ENCODE measurements at regions of chr2 and their contacts with region 1.

Region 1: GRCh38 chr2:222613715-222614331 is 42.1 kb downstream of the FARSB start:
- DNase-seq: peak; percentile 14
- H3K4me3 ChIP-seq: no peak overlapping the region
- H3K27ac ChIP-seq: no peak overlapping the region
- H3K4me1 ChIP-seq: no peaks in the 10 kb centered on the region
- H3K27me3 ChIP-seq: no peaks in the 10 kb centered on the region
- CTCF ChIP-seq: peak; percentile 72 to 78

Region 2: DNA sequence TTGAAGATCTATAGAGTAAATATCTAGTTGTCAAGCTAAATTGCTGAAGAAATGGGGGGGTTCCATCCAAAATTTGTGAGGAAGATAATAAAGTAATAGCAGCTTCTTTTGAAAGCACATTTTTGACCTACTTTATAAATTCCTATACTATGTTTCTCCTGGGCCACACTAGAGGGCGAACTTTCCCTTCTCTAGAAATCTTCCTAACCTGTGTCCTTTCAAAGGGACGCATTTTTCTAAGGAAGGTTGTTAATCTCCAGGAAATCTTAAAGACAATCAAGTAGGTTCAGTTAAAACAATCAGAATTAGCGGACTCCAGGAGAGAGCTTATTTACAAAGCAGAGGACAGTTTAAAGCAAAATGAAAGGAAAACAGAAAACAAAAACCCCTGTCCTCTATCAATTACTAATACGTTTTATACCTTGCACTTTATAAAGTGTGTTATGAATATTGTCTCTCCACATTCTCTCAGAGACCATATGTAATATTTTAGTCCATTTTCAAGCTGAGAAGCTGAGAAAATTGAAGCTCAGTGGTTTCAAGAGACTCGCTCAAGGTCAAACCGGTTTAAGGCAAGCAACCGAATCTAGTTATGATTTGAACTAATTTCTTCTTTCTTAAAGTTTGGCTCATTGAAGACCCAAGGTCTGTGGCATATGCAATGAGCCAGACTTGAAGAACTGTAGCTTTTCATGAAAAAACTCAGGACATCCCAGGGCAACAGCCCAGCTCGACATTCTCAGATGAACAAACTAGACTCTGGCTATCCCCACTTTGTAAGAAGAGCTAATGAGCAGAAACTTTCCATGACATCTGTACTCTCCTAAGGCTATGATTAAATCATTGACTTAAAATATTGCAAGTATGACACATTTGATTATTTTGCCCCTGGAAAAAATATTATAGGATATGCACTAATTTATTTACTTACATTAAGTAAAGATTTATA is 588.6 kb before region 1 on chr2:
- CTCF ChIA-PET with region 1: no interaction called
- dilution Hi-C with region 1: no loop called
- in situ Hi-C with region 1: no loop called
- intact Hi-C with region 1: loop called (anchors 1 kb)
- DNase-seq: peak; percentile 14
- H3K4me3 ChIP-seq: no peak overlapping the region
- H3K27ac ChIP-seq: no peak overlapping the region
- H3K4me1 ChIP-seq: no peaks in the 10 kb centered on the region
- H3K27me3 ChIP-seq: no peaks in the 10 kb centered on the region
- CTCF ChIP-seq: peak; percentile 62 to 76

Region 3: DNA sequence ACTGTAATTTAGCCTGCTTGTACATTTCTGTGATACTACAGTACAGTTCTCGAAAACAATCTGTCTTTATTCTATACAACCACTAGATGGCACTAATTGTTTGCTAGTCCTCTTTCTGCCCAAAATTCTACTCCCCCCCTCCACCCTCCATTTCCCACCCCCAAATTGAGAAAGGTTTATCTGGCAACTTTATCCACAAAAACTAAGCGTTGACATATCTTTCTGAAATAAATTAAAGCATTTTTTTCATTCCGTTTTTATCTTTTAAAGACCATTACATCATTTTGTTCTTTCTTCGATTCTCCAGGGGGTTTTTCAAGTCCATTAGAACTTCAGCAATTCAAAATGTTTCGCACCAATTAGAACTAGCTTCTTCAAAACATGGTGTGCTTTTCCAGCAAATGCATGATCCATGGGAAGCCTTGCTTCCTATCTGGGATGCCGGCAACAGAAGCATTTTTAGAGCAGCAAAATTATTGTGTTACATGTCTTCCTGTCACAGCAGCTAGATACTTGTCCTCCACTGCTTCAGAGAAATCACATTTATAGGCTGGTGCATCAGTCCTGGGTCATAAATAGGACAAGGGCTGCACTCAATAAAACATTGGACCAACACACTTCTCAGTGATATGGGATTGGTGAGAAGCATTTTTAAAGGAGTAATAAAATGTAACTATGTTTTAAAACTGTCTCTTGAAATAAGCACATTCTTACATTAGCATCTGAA is 556.3 kb before region 1 on chr2:
- CTCF ChIA-PET with region 1: no interaction called
- dilution Hi-C with region 1: no loop called
- in situ Hi-C with region 1: no loop called
- intact Hi-C with region 1: loop called (anchors 2 kb)
- DNase-seq: no peak
- H3K4me3 ChIP-seq: no peak overlapping the region
- H3K27ac ChIP-seq: no peak overlapping the region
- H3K4me1 ChIP-seq: no peaks in the 10 kb centered on the region
- H3K27me3 ChIP-seq: peaks cover 5% of the 10 kb centered on the region
- CTCF ChIP-seq: peak; percentile 54 to 62